ENCODE measurements at regions of chr4 and their contacts with region 1.

Region 1: DNA sequence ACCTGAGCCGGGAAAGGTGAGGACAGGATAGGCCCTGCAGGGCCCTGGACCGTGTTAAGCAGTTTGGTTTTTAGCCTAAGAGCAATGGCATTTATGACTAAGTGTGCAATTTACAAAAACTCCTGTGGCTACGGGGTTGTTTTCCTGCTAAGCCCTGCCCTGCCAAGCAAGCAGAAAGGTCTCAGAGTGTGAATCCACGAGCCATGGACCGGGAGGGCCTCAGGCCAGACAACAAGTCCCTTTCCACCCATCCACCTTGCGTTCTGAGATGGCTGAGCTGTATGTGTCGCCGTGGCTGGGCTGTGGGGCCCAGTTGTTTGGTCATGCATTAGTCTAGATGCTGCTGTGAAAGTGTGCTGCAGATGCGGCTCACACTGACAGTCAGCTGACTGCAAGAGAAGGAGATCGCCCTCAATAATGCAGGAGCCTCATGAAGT is 33.9 kb upstream of the AFAP1 start:
- DNase-seq: peak; percentile 51 to 87
- H3K4me3 ChIP-seq: no peak overlapping the region
- H3K27ac ChIP-seq: peak overlapping the region; percentile 94
- H3K4me1 ChIP-seq: peaks cover 82% of the 10 kb centered on the region
- H3K27me3 ChIP-seq: no peaks in the 10 kb centered on the region
- CTCF ChIP-seq: no peak

Region 2: DNA sequence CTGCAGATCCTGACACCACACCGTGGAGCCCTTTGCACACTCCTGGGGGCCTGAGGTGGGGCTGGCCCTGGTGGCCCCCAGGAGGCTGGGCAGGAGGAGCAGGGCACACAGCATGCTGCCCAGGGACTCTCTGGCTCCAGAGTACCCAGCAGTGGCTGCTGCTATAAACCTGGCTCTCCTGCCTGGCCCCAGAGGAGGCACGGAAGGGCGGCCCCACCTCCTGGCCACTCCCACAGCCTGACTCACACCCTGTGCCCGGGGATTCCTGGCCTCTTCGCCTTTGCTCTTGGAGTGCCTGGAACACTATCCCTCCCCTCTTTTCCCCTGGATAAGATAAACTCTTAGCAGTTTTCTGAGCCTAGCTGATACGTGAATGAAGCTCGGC is 538.8 kb before region 1 on chr4 and contains the start of gene PSAPL1:
- CTCF ChIA-PET with region 1: no interaction called
- POLR2A ChIA-PET with region 1: no interaction called
- intact Hi-C with region 1: no loop called
- DNase-seq: peak; percentile 62 to 79
- H3K4me3 ChIP-seq: no peak within 1 kb of the TSS
- H3K27ac ChIP-seq: no peak within 1 kb of the TSS
- H3K4me1 ChIP-seq: peaks cover 26% of the 10 kb centered on the region
- H3K27me3 ChIP-seq: no peaks in the 10 kb centered on the region
- CTCF ChIP-seq: no peak
- total RNA-seq, gene PSAPL1: 0.15 TPM in 2 replicates

Region 3: DNA sequence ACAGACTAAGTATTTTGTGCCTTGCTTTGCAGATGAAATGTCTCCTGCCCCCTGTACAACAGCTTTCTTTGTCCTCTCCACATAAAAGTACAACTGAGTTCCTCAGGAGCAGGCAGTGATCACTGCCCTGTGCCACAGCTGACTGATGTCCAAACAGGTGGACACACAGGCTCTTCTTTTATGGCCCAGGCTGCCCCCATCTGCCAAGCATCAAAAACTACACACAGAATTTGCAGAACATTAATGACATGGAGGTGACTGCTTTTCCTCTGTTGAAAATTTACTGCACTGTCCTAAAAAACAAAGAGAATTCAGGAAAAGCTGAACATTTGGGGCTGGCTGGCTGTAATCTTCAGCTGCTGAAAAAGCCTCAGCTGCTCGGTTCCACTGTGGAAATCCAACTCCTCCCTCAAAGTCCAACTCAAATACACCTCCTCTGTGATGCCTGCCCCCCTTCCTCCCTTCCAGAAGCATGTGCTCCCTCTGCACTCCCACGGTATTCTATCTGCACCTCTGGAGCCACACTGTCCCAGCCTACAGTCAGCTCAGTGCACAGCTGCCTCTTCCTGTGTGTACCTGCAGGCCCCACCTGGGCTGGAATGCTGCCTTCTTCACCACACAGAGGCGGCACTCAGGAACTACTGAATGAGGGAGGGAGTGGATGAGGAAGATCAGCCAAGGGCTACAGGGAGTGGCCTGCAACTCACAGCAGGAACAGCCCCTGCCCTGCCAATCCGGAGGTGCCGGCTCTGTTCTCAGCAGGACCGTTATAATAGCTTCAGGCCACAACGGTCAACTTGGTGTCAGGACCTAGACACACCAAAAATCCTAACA is 44.2 kb before region 1 on chr4:
- CTCF ChIA-PET with region 1: no interaction called
- POLR2A ChIA-PET with region 1: interaction called, 3 read pairs
- intact Hi-C with region 1: loop called (anchors 1 kb)
- DNase-seq: peak; percentile 77 to 82
- H3K4me3 ChIP-seq: no peak overlapping the region
- H3K27ac ChIP-seq: no peak overlapping the region
- H3K4me1 ChIP-seq: peaks cover 31% of the 10 kb centered on the region
- H3K27me3 ChIP-seq: no peaks in the 10 kb centered on the region
- CTCF ChIP-seq: 0 out of 2 replicates have a peak, but pooled peaks have one; percentile 22

Region 4: DNA sequence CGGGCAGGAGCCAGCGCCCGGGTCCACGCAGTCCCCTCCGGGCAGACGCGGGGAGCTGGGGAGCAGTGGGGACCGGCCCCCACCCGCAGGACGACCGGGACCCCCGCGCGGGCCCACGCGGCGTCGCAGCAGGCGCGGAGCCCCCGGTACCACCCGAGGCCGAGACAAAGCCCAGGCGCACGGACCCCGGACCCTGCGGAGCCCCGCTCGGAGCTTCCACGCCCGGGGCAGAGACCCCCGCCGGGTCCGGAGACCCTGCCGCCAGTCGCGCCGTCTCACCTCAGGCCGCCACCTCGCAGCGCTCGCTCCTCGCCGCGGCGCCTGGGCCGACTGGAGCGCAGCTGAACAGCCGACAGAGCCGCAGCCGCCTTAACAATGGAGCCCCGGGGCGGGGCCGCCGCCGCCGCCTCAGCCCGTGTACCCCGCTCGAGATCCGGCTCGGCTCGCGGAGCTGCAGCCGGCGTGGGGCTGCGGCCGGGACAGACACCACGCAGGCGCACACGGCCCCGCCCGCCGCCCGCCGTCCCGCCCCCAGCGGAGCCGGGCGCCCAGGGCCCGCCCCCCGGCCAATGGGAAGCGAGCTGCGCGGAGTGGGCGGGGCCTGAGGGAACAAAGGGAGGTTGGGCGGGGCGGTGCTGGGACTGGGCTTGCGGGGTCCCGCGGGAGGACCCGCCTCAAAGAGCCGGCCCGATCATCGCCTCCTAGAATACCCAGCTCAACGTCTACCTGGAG is 34.0 kb before region 1 on chr4 and contains the start of gene AFAP1:
- CTCF ChIA-PET with region 1: interaction called, 21 read pairs
- POLR2A ChIA-PET with region 1: interaction called, 6 read pairs
- intact Hi-C with region 1: loop called (anchors 1 kb)
- DNase-seq: peak; percentile 49 to 88
- H3K4me3 ChIP-seq: peak within 1 kb of the TSS; percentile 85
- H3K27ac ChIP-seq: peak within 1 kb of the TSS; percentile 83
- H3K4me1 ChIP-seq: peaks cover 69% of the 10 kb centered on the region
- H3K27me3 ChIP-seq: no peaks in the 10 kb centered on the region
- CTCF ChIP-seq: no peak
- total RNA-seq, gene AFAP1: 69.6 and 84.1 TPM in 2 replicates

Region 5: DNA sequence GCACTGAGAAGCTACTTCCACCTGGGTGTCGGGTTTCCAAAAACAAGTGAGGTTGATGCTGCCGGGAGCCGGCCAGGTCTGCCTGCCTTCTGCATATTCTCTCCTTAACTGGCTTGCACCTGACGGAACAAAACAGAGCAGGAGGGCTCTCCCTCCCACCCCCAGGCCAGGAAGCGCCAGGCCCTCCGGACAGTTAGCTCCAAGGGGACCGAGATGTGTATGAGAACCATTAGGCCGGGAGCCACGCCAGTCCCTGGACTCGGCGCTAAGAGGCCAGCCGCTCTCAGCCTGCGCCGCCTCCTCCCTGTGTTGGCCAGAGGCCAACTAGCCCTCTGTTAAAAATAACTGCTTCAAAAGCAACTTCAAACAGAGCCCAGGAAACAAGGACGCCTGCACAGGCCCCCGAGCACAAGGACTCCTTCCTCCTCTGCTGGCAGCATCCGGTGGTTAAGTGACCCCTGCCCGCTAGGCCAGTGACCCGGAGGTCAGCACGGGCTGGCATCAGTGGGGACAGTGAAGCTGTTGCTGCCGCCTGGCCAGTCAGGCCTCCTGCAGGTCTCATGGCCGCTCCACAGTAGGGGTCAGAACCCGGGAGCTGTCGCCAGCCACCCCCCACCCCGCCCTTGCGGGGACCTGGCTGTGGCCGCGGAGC is 77.1 kb after region 1 on chr4:
- CTCF ChIA-PET with region 1: no interaction called
- POLR2A ChIA-PET with region 1: no interaction called
- intact Hi-C with region 1: no loop called
- DNase-seq: peak in 1 of 2 experiments; percentile 22
- H3K4me3 ChIP-seq: no peak overlapping the region
- H3K27ac ChIP-seq: no peak overlapping the region
- H3K4me1 ChIP-seq: no peaks in the 10 kb centered on the region
- H3K27me3 ChIP-seq: no peaks in the 10 kb centered on the region
- CTCF ChIP-seq: no peak

Region 6: GRCh38 chr4:8504279-8505007 is 530.9 kb after region 1 on chr4:
- CTCF ChIA-PET with region 1: no interaction called
- POLR2A ChIA-PET with region 1: no interaction called
- intact Hi-C with region 1: no loop called
- DNase-seq: peak; percentile 43 to 64
- H3K4me3 ChIP-seq: no peak overlapping the region
- H3K27ac ChIP-seq: no peak overlapping the region
- H3K4me1 ChIP-seq: no peaks in the 10 kb centered on the region
- H3K27me3 ChIP-seq: no peaks in the 10 kb centered on the region
- CTCF ChIP-seq: no peak

Region 7: GRCh38 chr4:8547108-8547970 is 573.8 kb after region 1 on chr4:
- CTCF ChIA-PET with region 1: no interaction called
- POLR2A ChIA-PET with region 1: no interaction called
- intact Hi-C with region 1: no loop called
- DNase-seq: peak; percentile 66 to 89
- H3K4me3 ChIP-seq: peak overlapping the region; percentile 28; the same call in 1 of the 2 replicates
- H3K27ac ChIP-seq: peak overlapping the region; percentile 98
- H3K4me1 ChIP-seq: peaks cover 46% of the 10 kb centered on the region
- H3K27me3 ChIP-seq: no peaks in the 10 kb centered on the region
- CTCF ChIP-seq: peak; percentile 47

Measured in PC-9 (cell line).